Activated CD4-positive, alpha-beta T cell treated with anti-CD3 and anti-CD28 coated beads for 36 hours (primary cell): ENCODE measurements at regions of chr2 and their contacts with region 1.

Region 1: GRCh38 chr2:73821227-73821626 is 7.5 kb upstream of the STAMBP start:
- DNase-seq: peak; percentile 68
- ATAC-seq: peak; percentile 94
- H3K4me3 Mint-ChIP-seq: peak overlapping the region; percentile 16
- H3K27ac Mint-ChIP-seq: peak overlapping the region; percentile 79
- H3K4me1 Mint-ChIP-seq: peaks cover 33% of the 10 kb centered on the region
- H3K27me3 Mint-ChIP-seq: peaks cover 3% of the 10 kb centered on the region

Region 2: GRCh38 chr2:72738096-72738495 is 1083.1 kb before region 1 on chr2:
- CTCF ChIA-PET with region 1: no interaction called
- POLR2A ChIA-PET with region 1: no interaction called
- intact Hi-C with region 1: no loop called
- DNase-seq: no peak
- ATAC-seq: peak; percentile 61
- H3K4me3 Mint-ChIP-seq: no peak overlapping the region
- H3K27ac Mint-ChIP-seq: no peak overlapping the region
- H3K4me1 Mint-ChIP-seq: no peaks in the 10 kb centered on the region
- H3K27me3 Mint-ChIP-seq: no peaks in the 10 kb centered on the region

Region 3: DNA sequence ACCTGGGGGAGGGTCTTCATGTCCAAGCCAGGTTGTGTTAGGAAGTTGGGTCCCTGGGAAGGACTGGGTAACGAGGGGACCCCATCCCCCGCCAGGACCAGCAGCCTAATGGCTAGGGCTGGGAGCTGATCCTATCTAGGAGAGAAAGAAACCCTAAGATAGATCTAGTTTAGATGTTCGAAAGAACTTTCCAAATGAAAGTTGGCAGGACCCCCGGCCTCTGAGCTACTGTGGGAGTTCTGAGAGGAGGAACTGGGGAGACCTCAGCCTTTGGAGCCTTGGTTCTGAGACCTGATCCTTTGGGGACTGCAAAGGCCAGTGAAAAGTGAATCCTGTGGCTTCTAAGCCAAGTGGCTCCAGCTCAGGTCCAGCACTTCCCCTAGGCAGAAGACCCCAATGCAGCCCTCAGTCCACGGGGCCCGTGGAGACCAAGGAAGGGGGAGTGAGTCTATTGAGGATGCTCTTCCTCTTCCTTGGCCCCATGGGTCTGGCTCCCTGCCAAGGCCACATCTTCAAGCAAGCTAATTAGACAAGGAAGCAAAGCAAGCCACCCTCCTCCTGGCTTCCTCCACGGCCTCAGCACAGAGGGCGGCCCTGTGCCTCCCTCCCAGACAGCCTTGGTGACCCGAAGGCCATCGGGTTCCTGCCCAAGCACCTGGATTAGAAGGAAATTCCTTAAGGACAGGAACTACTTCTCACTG is 563.7 kb before region 1 on chr2:
- CTCF ChIA-PET with region 1: no interaction called
- POLR2A ChIA-PET with region 1: no interaction called
- intact Hi-C with region 1: no loop called
- DNase-seq: peak; percentile 25
- ATAC-seq: no peak
- H3K4me3 Mint-ChIP-seq: no peak overlapping the region
- H3K27ac Mint-ChIP-seq: no peak overlapping the region
- H3K4me1 Mint-ChIP-seq: no peaks in the 10 kb centered on the region
- H3K27me3 Mint-ChIP-seq: no peaks in the 10 kb centered on the region

Region 4: GRCh38 chr2:73759285-73759764 is 61.9 kb before region 1 on chr2:
- CTCF ChIA-PET with region 1: no interaction called
- POLR2A ChIA-PET with region 1: no interaction called
- intact Hi-C with region 1: no loop called
- DNase-seq: no peak
- ATAC-seq: no peak
- H3K4me3 Mint-ChIP-seq: no peak overlapping the region
- H3K27ac Mint-ChIP-seq: no peak overlapping the region
- H3K4me1 Mint-ChIP-seq: no peaks in the 10 kb centered on the region
- H3K27me3 Mint-ChIP-seq: no peaks in the 10 kb centered on the region

Region 5: GRCh38 chr2:73779467-73780236 is 41.6 kb before region 1 on chr2 and contains the start of gene DUSP11:
- CTCF ChIA-PET with region 1: interaction called, 4 read pairs
- POLR2A ChIA-PET with region 1: no interaction called
- intact Hi-C with region 1: loop called in 1 of 2 experiments (anchors 1 kb)
- DNase-seq: peak; percentile 98
- ATAC-seq: peak; percentile 100
- H3K4me3 Mint-ChIP-seq: peak within 1 kb of the TSS; percentile 100
- H3K27ac Mint-ChIP-seq: peak within 1 kb of the TSS; percentile 98
- H3K4me1 Mint-ChIP-seq: peaks cover 27% of the 10 kb centered on the region
- H3K27me3 Mint-ChIP-seq: peaks cover 2% of the 10 kb centered on the region
- total RNA-seq, gene DUSP11: 27.6 to 33.5 TPM

Region 6: GRCh38 chr2:74349889-74350288 is 528.7 kb after region 1 on chr2:
- CTCF ChIA-PET with region 1: no interaction called
- POLR2A ChIA-PET with region 1: no interaction called
- intact Hi-C with region 1: no loop called
- DNase-seq: no peak
- ATAC-seq: no peak
- H3K4me3 Mint-ChIP-seq: no peak overlapping the region
- H3K27ac Mint-ChIP-seq: no peak overlapping the region
- H3K4me1 Mint-ChIP-seq: no peaks in the 10 kb centered on the region
- H3K27me3 Mint-ChIP-seq: no peaks in the 10 kb centered on the region